ENCODE measurements at regions of chr22 and their contacts with region 1.

Region 1: GRCh38 chr22:32985899-32986765 is 72.0 kb downstream of the SYN3 start:
- DNase-seq: peak; percentile 84
- H3K4me3 Mint-ChIP-seq: no peak overlapping the region
- H3K27ac Mint-ChIP-seq: no peak overlapping the region
- H3K4me1 Mint-ChIP-seq: no peaks in the 10 kb centered on the region
- H3K27me3 Mint-ChIP-seq: peaks cover 1% of the 10 kb centered on the region

Region 2: GRCh38 chr22:32528984-32529982 is 456.8 kb before region 1 on chr22:
- intact Hi-C with region 1: loop called (anchors 2 kb)
- DNase-seq: peak; percentile 85
- H3K4me3 Mint-ChIP-seq: no peak overlapping the region
- H3K27ac Mint-ChIP-seq: no peak overlapping the region
- H3K4me1 Mint-ChIP-seq: no peaks in the 10 kb centered on the region
- H3K27me3 Mint-ChIP-seq: peaks cover 2% of the 10 kb centered on the region

Region 3: DNA sequence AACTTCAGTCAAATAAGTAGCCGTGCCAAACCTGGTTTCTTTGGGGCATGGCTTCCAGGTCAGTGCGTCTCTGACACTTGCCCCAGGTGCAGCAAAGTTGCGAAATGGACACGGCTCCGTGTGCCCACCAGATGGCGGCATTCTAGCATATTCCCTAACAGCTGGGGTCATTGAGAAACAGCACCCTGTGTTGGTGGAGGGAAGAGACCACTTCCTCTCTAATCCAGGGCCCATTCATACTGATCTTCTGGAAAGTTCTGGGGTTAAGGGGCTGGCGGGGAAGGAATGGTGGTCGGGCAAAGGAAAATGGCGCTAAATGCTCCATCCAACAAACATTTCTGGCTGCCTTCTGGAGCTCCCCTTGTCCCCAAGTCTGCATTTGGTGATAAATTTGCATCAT is 325.8 kb before region 1 on chr22:
- intact Hi-C with region 1: loop called (anchors 2 kb)
- DNase-seq: peak; percentile 85
- H3K4me3 Mint-ChIP-seq: no peak overlapping the region
- H3K27ac Mint-ChIP-seq: no peak overlapping the region
- H3K4me1 Mint-ChIP-seq: no peaks in the 10 kb centered on the region
- H3K27me3 Mint-ChIP-seq: peaks cover 9% of the 10 kb centered on the region

Region 4: GRCh38 chr22:32684822-32685187 is 301.3 kb before region 1 on chr22:
- intact Hi-C with region 1: no loop called
- DNase-seq: no peak
- H3K4me3 Mint-ChIP-seq: no peak overlapping the region
- H3K27ac Mint-ChIP-seq: no peak overlapping the region
- H3K4me1 Mint-ChIP-seq: no peaks in the 10 kb centered on the region
- H3K27me3 Mint-ChIP-seq: peaks cover 2% of the 10 kb centered on the region

Measured in activated CD4-positive, alpha-beta T cell treated with anti-CD3 and anti-CD28 coated beads, Interleukin-2, amount 10 ng/mL, durations not matched to agents 24 days and 14 days (primary cell).